GM10248 (cell line): ENCODE measurements at regions of chr7 and their contacts with region 1.

Region 1: GRCh38 chr7:44973610-44974401 is 5.0 kb downstream of the MYO1G start:
- DNase-seq: no peak
- CTCF ChIP-seq: peak; percentile 38

Region 2: DNA sequence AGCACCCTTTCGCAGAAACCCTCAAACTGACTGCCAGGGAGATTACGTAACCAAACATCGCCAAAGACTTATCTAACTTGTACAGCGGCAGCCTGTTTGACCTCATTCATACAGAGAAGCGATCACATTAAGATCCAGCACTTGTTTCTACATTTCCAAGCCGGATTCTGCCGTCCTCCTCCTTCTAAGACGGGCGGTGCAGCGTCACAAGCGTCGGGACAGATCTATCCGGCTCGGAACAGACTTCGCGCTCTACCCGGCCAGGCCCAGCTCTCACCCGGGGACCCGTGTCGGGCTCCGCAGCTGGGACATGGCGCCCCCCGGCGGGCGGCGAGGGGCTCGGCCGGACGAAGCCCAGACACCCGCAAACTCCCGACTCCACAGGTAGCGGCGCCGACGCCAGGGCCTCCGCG is 126.3 kb before region 1 on chr7:
- CTCF ChIA-PET with region 1: interaction called, 13 read pairs
- POLR2A ChIA-PET with region 1: interaction called, 4 read pairs
- DNase-seq: peak; percentile 87
- CTCF ChIP-seq: peak; percentile 83

Region 3: DNA sequence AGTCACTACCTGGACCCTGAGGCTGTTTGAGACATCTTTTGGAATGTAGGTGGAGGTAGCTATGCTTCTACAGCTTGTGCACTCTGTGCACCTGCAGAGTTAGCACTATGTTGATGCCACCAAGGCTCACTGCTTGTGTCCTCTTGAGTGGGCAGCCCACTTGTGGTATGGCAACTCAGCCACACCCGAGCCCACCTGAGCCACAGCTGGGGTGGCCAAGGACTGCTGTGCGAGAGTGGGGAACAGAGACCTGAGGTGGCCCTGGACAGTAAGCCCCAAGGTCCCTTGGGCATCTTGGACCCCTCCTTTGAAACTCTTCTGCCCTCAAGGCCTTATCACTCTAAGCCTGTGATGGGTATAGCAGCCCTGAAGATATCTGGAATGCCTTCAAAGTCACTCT is 20.6 kb before region 1 on chr7:
- CTCF ChIA-PET with region 1: interaction called, 14 read pairs
- POLR2A ChIA-PET with region 1: interaction called, 6 read pairs
- DNase-seq: no peak
- CTCF ChIP-seq: no peak

Region 4: GRCh38 chr7:44999245-45000095 is 25.7 kb after region 1 on chr7:
- CTCF ChIA-PET with region 1: interaction called, 19 read pairs
- POLR2A ChIA-PET with region 1: interaction called, 4 read pairs
- DNase-seq: peak; percentile 94
- CTCF ChIP-seq: no peak

Region 5: GRCh38 chr7:45136106-45137060 is 162.6 kb after region 1 on chr7:
- CTCF ChIA-PET with region 1: interaction called, 147 read pairs
- POLR2A ChIA-PET with region 1: no interaction called
- DNase-seq: peak; percentile 85
- CTCF ChIP-seq: peak; percentile 82

Region 6: DNA sequence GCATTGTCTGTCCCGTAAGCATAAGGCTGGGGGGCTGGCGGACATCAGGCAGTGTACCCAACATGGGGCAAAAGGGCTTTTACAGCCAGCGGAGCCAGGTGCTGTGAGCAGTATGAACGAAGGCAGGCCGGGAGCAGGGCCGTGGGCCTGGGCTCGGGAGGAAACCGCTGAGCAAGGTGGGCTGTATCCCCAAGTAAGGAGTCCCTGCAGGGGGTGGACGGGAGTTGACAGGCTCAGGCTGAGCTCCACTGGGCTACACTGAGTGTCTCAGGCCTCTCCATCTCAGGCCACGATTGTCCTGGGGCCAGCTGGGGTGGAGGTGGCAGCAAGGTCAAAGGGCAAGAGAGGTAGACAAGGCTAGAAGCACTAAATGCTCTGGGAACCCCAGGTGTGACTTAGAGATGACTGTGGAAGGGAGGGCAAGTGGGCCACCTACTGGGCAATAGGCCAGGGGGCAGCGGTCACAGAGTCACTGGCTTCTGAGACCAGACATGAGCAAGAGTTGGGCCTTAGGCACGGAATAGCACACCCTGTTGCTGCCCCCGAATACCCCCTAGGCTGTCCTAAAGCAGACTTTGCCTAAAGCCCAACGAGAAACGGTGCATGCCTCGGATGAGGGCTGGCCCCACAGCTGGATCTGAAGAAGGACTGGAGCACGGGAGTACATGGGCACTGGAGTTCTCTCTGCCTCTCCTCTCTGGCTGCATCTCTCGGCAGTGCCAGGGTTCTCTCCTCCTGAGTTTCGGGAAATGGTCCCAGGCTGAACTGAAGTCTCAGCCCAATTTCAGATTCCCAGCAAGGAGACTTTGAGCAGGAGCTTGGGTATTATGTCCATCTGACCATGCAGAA is 172.9 kb after region 1 on chr7:
- CTCF ChIA-PET with region 1: no interaction called
- POLR2A ChIA-PET with region 1: no interaction called
- DNase-seq: no peak
- CTCF ChIP-seq: peak; percentile 10